Activated CD8-positive, alpha-beta T cell treated with anti-CD3 and anti-CD28 coated beads for 36 hours (primary cell): ENCODE measurements at regions of chr17 and their contacts with region 1.

Region 1: DNA sequence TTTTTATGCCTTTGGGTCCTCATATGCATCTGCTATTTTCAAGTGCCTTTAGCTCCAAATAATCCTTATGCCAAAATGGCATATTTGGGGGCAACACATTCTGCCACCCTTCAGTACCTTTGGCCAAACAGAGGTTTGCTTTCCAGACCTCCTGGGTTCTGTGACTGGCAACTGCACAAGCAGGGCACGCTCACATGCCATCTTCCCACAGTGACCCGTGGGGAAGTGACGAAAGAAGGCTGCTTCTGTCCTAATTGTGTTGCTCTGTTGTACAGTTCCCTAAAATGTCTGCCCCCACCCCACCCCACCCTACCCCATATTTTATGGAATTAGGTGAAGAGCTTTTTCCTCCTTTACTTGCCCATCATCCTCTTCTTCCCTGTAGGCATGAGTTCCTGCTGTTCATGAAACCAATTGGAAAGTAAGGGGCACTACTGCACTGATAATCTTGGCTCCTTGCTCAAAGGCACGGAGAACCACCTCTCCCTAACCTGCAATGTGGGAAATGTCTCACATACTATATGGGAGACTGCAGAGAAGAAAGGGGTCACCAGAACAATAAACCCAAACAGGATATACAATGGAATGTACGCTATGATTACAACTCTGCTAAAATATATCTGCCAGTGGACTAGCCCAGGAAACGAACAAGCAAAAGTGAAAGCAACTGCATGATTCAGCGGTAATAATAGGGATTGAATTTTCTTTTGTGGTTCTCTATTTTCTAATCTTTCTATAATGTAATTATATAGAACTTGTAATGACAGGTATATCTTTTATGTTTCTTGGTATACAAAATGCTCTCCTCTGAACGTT is 3.3 kb upstream of the SLFN12L start:
- DNase-seq: peak; percentile 71
- ATAC-seq: peak; percentile 28
- H3K4me3 Mint-ChIP-seq: peak overlapping the region; percentile 87
- H3K27ac Mint-ChIP-seq: peak overlapping the region; percentile 97
- H3K4me1 Mint-ChIP-seq: peaks cover 49% of the 10 kb centered on the region
- H3K27me3 Mint-ChIP-seq: no peaks in the 10 kb centered on the region
- CTCF ChIP-seq: no peak

Region 2: DNA sequence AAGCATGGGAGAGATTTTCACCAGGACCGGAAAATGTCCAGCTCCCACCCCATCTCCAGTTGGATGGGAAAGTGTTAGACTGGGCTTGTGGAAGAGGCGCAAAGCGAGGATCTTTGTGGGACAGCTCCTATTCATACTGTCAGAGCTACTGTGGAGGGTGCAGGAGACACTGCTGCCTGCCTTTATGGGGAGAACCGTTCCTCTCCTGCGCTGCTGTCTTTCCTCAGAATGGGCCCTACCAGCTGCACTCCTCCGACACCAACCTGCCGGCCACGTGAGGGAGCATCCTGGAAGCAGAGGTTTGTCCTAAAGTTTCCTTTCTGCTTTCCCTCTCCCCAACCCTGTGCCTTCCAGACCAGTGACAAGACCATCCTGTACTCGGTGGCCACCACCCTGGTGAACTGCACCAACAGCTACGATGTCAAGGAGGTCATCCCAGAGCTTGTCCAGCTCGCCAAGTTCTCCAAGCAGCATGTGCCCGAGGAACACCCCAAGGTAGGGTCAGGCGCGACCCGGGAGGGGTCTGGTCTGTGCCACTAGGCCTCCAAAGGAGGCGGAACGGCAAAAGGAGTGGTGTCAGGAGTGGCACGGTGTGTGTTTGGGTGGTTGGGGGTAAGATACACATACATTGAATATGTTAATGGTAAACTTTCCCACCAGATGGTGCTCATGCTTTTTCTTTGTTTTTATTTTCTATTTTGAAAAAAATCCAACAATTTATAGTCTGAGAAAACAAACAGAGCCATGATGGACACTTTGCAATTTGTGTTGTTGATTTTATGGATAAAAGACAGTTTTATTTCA is 369.6 kb before region 1 on chr17:
- CTCF ChIA-PET with region 1: interaction called, 9 read pairs
- POLR2A ChIA-PET with region 1: no interaction called
- intact Hi-C with region 1: loop called (anchors 2 kb)
- DNase-seq: peak; percentile 31
- ATAC-seq: peak; percentile 83
- H3K4me3 Mint-ChIP-seq: peak overlapping the region; percentile 20
- H3K27ac Mint-ChIP-seq: peak overlapping the region; percentile 79
- H3K4me1 Mint-ChIP-seq: peaks cover 38% of the 10 kb centered on the region
- H3K27me3 Mint-ChIP-seq: no peaks in the 10 kb centered on the region
- CTCF ChIP-seq: peak; percentile 69

Region 3: GRCh38 chr17:35242805-35243560 is 297.8 kb before region 1 on chr17 and contains the start of gene SLFN5:
- CTCF ChIA-PET with region 1: interaction called, 9 read pairs
- POLR2A ChIA-PET with region 1: interaction called, 9 read pairs
- intact Hi-C with region 1: loop called (anchors 2 kb)
- DNase-seq: peak; percentile 95
- ATAC-seq: peak; percentile 72
- H3K4me3 Mint-ChIP-seq: peak within 1 kb of the TSS; percentile 93
- H3K27ac Mint-ChIP-seq: peak within 1 kb of the TSS; percentile 97
- H3K4me1 Mint-ChIP-seq: peaks cover 64% of the 10 kb centered on the region
- H3K27me3 Mint-ChIP-seq: no peaks in the 10 kb centered on the region
- CTCF ChIP-seq: no peak
- total RNA-seq, gene SLFN5: 29.1 to 32.7 TPM

Region 4: DNA sequence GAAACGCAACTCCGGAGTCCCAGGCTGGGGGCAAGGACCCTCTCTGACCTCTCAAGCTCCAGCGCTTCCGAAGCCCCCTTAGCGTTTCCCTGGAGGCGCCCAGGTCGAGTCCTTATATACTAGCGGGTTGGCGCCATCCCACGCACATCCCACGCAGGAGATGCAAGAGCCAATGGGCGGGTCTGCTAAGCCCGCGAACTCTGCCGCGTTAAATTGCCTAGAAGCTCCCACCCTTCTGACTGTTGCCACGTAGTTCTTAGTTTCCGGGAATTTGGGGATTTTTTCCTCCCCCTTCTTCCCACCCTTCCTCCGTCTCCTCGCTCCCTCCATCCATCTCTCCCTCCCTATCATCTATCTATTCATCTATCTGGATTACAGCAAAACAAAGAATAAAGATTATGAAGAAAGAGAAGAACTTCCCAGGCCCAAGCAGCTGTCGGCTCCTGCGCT is 167.2 kb before region 1 on chr17 and contains the start of gene SLFN11:
- CTCF ChIA-PET with region 1: interaction called, 6 read pairs
- POLR2A ChIA-PET with region 1: interaction called, 66 read pairs
- intact Hi-C with region 1: no loop called
- DNase-seq: peak; percentile 95
- ATAC-seq: peak; percentile 71
- H3K4me3 Mint-ChIP-seq: peak within 1 kb of the TSS; percentile 91
- H3K27ac Mint-ChIP-seq: peak within 1 kb of the TSS; percentile 99
- H3K4me1 Mint-ChIP-seq: peaks cover 52% of the 10 kb centered on the region
- H3K27me3 Mint-ChIP-seq: no peaks in the 10 kb centered on the region
- CTCF ChIP-seq: no peak
- total RNA-seq, gene SLFN11: 95.8 to 106 TPM

Region 5: GRCh38 chr17:35404360-35404759 is 136.4 kb before region 1 on chr17:
- CTCF ChIA-PET with region 1: no interaction called
- POLR2A ChIA-PET with region 1: no interaction called
- intact Hi-C with region 1: no loop called
- DNase-seq: no peak
- ATAC-seq: peak; percentile 85
- H3K4me3 Mint-ChIP-seq: no peak overlapping the region
- H3K27ac Mint-ChIP-seq: no peak overlapping the region
- H3K4me1 Mint-ChIP-seq: peaks cover 11% of the 10 kb centered on the region
- H3K27me3 Mint-ChIP-seq: no peaks in the 10 kb centered on the region
- CTCF ChIP-seq: no peak

Region 6: DNA sequence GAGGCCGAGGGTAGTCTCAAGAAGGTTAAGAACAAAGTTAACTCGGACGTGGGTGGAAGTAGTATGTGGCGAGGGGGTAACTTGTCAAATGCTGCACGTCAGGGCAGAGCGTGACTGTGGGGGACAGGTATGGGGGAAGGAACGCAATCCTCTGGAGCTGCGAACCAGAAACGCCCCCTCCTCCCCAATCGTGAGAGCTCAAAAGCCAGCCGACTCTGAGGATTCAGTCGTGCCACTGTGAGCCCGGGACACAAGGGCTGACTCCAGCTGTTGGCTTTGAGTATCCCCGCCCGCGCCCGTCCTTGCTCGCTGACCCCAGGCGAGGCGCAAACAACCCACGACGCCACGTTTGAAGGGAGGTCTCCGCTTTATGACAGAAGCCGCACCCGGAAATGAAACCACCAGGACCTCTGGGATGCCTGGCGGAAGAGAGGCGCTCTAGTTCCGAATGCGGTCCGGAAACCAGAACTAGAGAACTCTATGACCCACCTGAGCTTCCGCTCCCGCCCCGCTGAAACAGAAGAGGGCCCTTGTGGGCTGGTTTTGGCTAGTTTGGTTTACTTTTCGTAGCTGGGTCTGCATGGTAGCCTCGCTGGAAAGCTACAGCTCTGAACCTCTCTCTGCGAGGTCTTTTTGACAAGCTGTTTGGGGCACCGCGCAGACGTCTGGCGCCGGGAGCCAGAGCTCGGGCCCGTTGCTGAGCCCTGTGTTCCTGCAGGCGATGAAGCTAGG is 37.6 kb after region 1 on chr17 and contains the start of gene PEX12:
- CTCF ChIA-PET with region 1: interaction called, 14 read pairs
- POLR2A ChIA-PET with region 1: interaction called, 5 read pairs
- intact Hi-C with region 1: no loop called
- DNase-seq: peak; percentile 94
- ATAC-seq: peak; percentile 94
- H3K4me3 Mint-ChIP-seq: peak within 1 kb of the TSS; percentile 100
- H3K27ac Mint-ChIP-seq: peak within 1 kb of the TSS; percentile 100
- H3K4me1 Mint-ChIP-seq: peaks cover 28% of the 10 kb centered on the region
- H3K27me3 Mint-ChIP-seq: no peaks in the 10 kb centered on the region
- CTCF ChIP-seq: no peak
- total RNA-seq, gene PEX12: 5.1 to 5.6 TPM